K562 (cell line): ENCODE measurements at regions of chr1 and their contacts with region 1.

Region 1: DNA sequence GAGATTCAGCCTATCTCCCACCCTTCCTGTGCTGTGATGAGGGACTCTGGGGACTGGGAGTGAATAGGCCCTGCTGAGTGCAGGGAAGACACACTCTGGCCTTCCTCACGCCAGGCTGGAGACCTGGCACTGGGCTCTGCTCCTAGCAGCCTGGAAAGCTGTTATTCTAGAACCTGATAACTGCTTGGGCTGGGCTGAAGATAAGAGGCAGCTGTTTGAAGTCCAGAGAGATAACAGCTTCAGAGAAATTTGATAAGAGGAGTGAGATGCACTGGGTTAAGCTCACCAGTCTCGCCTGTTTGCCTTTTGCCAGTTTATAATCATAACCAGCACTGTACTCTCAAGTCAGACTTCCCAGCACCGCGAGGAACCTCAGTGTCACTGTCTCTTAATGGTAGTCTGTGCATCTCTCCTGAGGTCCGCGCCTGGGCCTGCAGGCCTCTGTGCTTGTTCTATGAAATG is 46.6 kb upstream of the GPR37L1 start:
- DNase-seq: peak; percentile 56 to 82 (median 76)
- ATAC-seq: peak; percentile 75
- H3K4me3 ChIP-seq: no peak overlapping the region
- H3K27ac ChIP-seq: peak overlapping the region; percentile 37; the same call in 2 of the 3 replicates
- H3K4me1 ChIP-seq: peaks cover 22 to 28% of the 10 kb centered on the region in 2 experiments
- H3K27me3 ChIP-seq: no peaks in the 10 kb centered on the region
- CTCF ChIP-seq: no peak
- EP300 ChIP-seq: peak; percentile 99
- POLR2A ChIP-seq: no peak
- RAD21 ChIP-seq: peak; percentile 17 to 25

Region 2: GRCh38 chr1:202018468-202019255 is 57.4 kb before region 1 on chr1:
- CTCF ChIA-PET with region 1: no interaction called
- POLR2A ChIA-PET with region 1: interaction called, 3 read pairs
- in situ Hi-C with region 1: no loop called
- intact Hi-C with region 1: loop called (anchors 2 kb)
- DNase-seq: peak; percentile 92 to 93 (median 92)
- ATAC-seq: peak; percentile 94
- H3K4me3 ChIP-seq: no peak overlapping the region
- H3K27ac ChIP-seq: peak overlapping the region; percentile 53
- H3K4me1 ChIP-seq: peaks cover 30 to 39% of the 10 kb centered on the region in 2 experiments
- H3K27me3 ChIP-seq: peaks cover 5 to 7% of the 10 kb centered on the region in 2 experiments; a peak in 4 of 5 replicates
- CTCF ChIP-seq: no peak
- EP300 ChIP-seq: peak; percentile 87
- POLR2A ChIP-seq: no peak
- RAD21 ChIP-seq: peak in 1 of 2 experiments; percentile 20; a peak in 1 of 4 replicates

Region 3: DNA sequence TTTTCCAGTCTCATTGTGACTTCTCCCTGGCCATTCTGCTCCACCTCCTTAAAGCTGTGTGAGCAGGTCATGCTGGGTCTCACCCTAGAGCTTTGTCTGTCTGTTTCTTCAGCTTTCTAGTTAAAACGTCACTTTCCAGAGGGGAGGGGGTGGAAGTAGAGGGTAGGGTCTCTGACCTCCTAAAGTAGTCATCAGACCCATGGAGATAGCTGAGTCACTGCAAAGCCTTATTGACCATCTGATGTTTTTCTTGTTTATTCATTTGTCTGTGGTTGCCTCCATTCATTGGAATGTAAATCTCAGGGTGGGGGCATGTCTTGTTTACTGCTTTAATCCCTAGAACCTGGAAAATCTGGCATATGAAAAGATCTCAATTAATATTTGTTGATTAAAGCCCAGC is 13.0 kb before region 1 on chr1:
- CTCF ChIA-PET with region 1: no interaction called
- POLR2A ChIA-PET with region 1: interaction called, 6 read pairs
- in situ Hi-C with region 1: no loop called
- intact Hi-C with region 1: loop called (anchors 1 kb)
- DNase-seq: peak; percentile 28 to 61 (median 46)
- ATAC-seq: no peak; the same call in 2 of the 3 replicates
- H3K4me3 ChIP-seq: no peak overlapping the region
- H3K27ac ChIP-seq: no peak overlapping the region
- H3K4me1 ChIP-seq: peaks cover 0 to 20% of the 10 kb centered on the region in 2 experiments; a peak in 4 of 5 replicates
- H3K27me3 ChIP-seq: peaks cover 5 to 9% of the 10 kb centered on the region in 2 experiments; a peak in 3 of 5 replicates
- CTCF ChIP-seq: no peak
- EP300 ChIP-seq: peak; percentile 21; the same call in 1 of the 2 replicates
- POLR2A ChIP-seq: no peak
- RAD21 ChIP-seq: no peak